ENCODE measurements at regions of chr10 and their contacts with region 1.

Region 1: DNA sequence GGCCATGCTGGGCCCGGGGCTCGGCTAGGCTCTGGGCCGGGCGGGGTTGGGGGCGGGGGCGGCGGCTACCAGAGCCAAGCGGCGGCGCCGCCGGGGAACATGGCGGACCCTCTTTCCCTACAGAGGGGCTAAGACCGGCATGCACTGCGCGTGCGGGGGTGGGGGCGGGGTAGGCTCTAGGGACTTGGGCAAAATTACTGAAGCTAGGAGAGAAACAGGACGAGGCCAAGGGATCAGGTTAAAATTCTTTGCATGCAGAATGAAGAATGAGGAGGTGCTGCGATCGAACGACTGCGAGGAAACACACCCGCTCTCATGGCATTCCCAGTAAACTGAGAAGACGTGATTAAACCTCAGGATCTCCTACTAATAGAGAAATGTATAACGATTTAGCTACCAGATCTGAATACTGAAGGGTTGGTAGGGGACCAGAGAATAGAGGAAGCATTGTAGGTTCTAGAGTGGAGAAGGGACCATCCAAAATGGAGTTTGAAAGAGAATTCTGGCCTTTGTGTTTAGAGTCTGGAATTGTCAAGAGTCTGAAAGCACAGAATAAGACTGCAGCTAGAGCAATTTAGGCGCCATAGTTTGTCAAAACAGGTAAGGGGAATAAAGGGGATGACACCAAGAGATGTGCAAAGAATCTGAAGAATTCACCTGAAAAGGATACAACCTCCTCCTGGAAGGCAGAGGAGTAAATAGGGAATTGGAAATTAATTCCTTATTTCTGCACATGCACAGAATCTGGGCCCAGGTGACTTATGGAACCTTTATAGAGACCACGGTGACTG is at the start of gene PPP3CB:
- DNase-seq: no peak
- ATAC-seq: peak; percentile 73
- H3K4me3 Mint-ChIP-seq: peak within 1 kb of the TSS; percentile 92
- H3K27ac Mint-ChIP-seq: peak within 1 kb of the TSS; percentile 96
- H3K4me1 Mint-ChIP-seq: peaks cover 52% of the 10 kb centered on the region
- H3K27me3 Mint-ChIP-seq: no peaks in the 10 kb centered on the region
- CTCF ChIP-seq: no peak
- total RNA-seq, gene PPP3CB: 41.4 and 43.3 TPM in 2 replicates

Region 2: GRCh38 chr10:72354478-72355213 is 1141.4 kb before region 1 on chr10 and contains the start of gene DNAJB12:
- CTCF ChIA-PET with region 1: no interaction called
- POLR2A ChIA-PET with region 1: no interaction called
- intact Hi-C with region 1: loop called (anchors 10 kb)
- DNase-seq: peak; percentile 89
- ATAC-seq: peak; percentile 84
- H3K4me3 Mint-ChIP-seq: peak within 1 kb of the TSS; percentile 99
- H3K27ac Mint-ChIP-seq: peak within 1 kb of the TSS; percentile 99
- H3K4me1 Mint-ChIP-seq: peaks cover 35% of the 10 kb centered on the region
- H3K27me3 Mint-ChIP-seq: no peaks in the 10 kb centered on the region
- CTCF ChIP-seq: no peak
- total RNA-seq, gene DNAJB12: 39.0 and 39.9 TPM in 2 replicates

Region 3: DNA sequence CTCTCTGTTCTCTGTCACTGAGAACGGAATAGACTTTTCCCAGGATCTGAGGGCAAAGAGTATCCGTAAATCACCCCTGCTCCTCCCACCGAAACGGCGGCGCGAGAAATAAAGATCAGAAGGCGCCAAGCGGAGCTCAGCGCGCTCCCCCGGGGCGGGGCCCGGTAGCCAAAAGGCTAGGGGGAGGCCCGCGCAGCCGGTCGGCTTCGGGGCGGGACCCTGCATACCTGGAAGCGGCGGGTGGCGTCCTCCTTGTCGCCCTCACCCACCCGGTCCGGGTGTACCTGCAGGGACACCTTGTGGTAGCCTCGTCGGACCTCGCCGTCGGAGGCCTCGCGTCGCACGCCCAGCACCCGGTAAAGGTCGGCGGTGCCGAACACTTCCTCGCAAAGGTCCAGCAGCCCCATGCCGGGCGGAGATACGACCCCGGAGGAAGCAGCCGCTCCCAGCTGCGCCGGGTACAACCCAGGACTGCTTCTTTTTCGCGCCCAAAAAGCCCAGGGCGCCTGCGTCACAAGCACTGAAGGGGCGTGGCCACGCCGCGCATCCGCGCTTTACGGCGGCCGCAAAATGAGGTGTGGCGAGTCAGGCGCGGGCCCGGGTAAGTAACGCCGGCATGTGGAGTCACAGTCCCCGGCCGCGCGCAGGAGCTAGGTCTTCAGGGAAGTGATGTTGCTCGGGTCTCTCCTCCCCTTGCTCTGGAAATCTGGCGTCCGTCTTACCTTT is 249.1 kb before region 1 on chr10 and contains the start of gene DNAJC9:
- CTCF ChIA-PET with region 1: no interaction called
- POLR2A ChIA-PET with region 1: interaction called, 18 read pairs
- intact Hi-C with region 1: loop called (anchors 1 kb)
- DNase-seq: peak; percentile 99
- ATAC-seq: peak; percentile 84
- H3K4me3 Mint-ChIP-seq: peak within 1 kb of the TSS; percentile 93
- H3K27ac Mint-ChIP-seq: peak within 1 kb of the TSS; percentile 93
- H3K4me1 Mint-ChIP-seq: peaks cover 56% of the 10 kb centered on the region
- H3K27me3 Mint-ChIP-seq: no peaks in the 10 kb centered on the region
- CTCF ChIP-seq: no peak
- total RNA-seq, gene DNAJC9: 22.8 and 24.4 TPM in 2 replicates

Region 4: DNA sequence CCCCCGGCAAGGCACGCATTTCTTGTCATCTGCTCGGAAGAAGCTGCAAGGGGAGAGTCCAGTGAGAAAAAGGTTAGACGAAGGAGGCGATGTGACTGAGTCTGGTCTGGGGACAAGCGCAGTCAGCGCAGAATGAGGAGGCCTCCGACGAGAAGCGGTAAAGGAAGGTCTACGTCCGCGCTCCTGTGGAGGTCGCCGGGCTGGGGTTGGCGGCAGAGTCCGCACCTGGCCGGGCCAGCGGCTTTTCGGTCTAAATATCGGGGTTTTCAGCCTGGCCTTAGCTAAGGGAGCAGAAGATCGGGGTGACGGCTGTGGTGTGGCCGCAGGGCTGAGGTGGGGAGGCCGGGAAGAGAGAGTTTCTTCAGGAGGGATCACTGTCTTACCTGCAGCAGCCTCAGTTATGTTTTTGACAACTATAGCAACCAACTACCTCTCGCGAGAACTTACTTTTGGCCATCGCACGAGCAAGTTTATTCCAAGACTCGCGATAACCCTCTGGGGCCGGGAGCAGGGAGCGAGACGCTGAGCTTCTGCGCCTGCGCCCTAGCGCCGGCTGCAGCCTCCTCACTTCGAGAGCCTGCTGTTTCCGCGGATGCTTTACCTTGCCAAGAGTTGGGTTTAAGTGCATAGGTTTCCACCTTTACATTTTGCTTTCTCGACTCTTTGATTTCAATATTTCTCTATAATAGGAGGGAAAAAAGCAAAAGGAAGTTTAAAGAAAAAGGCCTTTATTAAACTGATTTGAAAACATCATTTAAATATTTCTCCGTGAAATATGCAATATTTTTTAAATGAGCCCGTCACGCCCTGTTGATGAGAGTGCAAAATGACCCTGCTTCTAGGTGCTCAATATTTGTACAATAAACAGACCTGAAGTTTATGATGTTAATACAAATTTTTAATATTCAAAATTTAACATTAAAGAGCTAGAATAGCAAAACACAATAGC is 137.5 kb before region 1 on chr10 and contains the start of gene CFAP70:
- CTCF ChIA-PET with region 1: no interaction called
- POLR2A ChIA-PET with region 1: interaction called, 10 read pairs
- intact Hi-C with region 1: no loop called
- DNase-seq: peak; percentile 77
- ATAC-seq: peak; percentile 98
- H3K4me3 Mint-ChIP-seq: peak within 1 kb of the TSS; percentile 97
- H3K27ac Mint-ChIP-seq: peak within 1 kb of the TSS; percentile 91
- H3K4me1 Mint-ChIP-seq: peaks cover 14% of the 10 kb centered on the region
- H3K27me3 Mint-ChIP-seq: peaks cover 2% of the 10 kb centered on the region
- CTCF ChIP-seq: no peak
- total RNA-seq, gene CFAP70: 1.2 and 1.7 TPM in 2 replicates

Region 5: DNA sequence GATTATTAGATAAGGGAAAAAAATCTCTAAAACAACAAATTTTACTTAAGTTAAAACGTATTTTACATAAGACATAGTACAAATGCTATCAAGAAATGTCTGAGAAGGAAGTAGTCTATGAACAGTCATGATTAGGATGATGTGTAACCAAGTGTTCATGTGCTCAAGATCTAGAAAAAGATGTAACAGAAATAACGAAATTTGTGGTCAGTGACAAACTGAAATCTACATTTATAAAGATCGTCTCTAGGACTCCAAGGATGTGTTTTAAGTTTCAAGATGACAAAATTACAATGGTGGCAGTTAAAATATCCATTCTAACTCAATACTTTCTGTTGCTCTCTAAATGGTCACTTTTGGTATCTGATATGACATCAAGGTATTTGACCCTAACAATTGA is 17.4 kb before region 1 on chr10:
- CTCF ChIA-PET with region 1: no interaction called
- POLR2A ChIA-PET with region 1: interaction called, 8 read pairs
- intact Hi-C with region 1: loop called (anchors 2 kb)
- DNase-seq: no peak
- ATAC-seq: no peak
- H3K4me3 Mint-ChIP-seq: no peak overlapping the region
- H3K27ac Mint-ChIP-seq: no peak overlapping the region
- H3K4me1 Mint-ChIP-seq: peaks cover 21% of the 10 kb centered on the region
- H3K27me3 Mint-ChIP-seq: no peaks in the 10 kb centered on the region
- CTCF ChIP-seq: no peak

Region 6: DNA sequence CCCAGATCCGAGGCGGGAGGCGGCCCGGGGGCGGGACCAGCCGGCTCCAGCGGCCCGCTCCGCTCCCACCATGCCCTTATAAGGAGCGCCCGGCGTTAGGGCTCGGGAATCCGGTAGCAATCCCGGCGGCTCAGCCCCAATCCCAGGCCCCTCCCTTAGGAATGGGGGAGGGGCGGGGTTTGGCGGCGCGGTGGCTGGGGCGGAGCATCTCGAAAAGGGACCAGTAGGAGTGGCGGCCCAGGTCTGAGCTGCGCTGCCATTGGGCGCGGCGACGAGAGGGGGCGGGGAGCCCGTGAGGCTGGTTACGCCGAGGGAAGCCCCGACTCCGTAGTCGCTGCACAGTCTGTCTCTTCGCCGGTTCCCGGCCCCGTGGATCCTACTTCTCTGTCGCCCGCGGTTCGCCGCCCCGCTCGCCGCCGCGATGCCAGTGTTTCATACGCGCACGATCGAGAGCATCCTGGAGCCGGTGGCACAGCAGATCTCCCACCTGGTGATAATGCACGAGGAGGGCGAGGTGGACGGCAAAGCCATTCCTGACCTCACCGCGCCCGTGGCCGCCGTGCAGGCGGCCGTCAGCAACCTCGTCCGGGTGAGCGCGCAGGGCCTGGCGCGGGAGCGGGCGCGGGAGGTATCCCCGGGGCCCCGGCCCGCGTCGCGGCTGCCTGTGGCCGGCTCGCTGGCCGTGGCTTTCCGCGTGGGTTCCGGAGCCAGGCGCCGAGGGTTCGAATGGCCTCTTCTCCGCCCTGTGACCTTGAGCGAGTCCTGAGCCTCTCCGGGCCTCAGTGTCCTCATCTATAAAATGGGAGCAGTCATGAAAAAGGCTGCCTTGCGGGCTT is 501.9 kb after region 1 on chr10 and contains the start of gene VCL:
- CTCF ChIA-PET with region 1: no interaction called
- POLR2A ChIA-PET with region 1: no interaction called
- intact Hi-C with region 1: loop called (anchors 2 kb)
- DNase-seq: peak; percentile 91
- ATAC-seq: peak; percentile 97
- H3K4me3 Mint-ChIP-seq: peak within 1 kb of the TSS; percentile 96
- H3K27ac Mint-ChIP-seq: peak within 1 kb of the TSS; percentile 95
- H3K4me1 Mint-ChIP-seq: peaks cover 45% of the 10 kb centered on the region
- H3K27me3 Mint-ChIP-seq: no peaks in the 10 kb centered on the region
- CTCF ChIP-seq: no peak
- total RNA-seq, gene VCL: 21.3 and 25.8 TPM in 2 replicates

Measured in activated B cell treated with CpG ODN at 0.5 μM for 24 hours (primary cell).